ENCODE measurements at regions of chr15 and their contacts with region 1.

Region 1: GRCh38 chr15:41989259-41989933 is 17.0 kb upstream of the EHD4 start:
- DNase-seq: peak; percentile 93
- H3K4me3 ChIP-seq: no peak overlapping the region
- H3K27ac ChIP-seq: no peak overlapping the region
- H3K4me1 ChIP-seq: no peaks in the 10 kb centered on the region
- H3K27me3 ChIP-seq: no peaks in the 10 kb centered on the region
- CTCF ChIP-seq: peak; percentile 98

Region 2: GRCh38 chr15:41483115-41483514 is 506.3 kb before region 1 on chr15:
- intact Hi-C with region 1: no loop called
- DNase-seq: no peak
- H3K4me3 ChIP-seq: no peak overlapping the region
- H3K27ac ChIP-seq: peak overlapping the region; percentile 66
- H3K4me1 ChIP-seq: no peaks in the 10 kb centered on the region
- H3K27me3 ChIP-seq: no peaks in the 10 kb centered on the region
- CTCF ChIP-seq: no peak

Region 3: DNA sequence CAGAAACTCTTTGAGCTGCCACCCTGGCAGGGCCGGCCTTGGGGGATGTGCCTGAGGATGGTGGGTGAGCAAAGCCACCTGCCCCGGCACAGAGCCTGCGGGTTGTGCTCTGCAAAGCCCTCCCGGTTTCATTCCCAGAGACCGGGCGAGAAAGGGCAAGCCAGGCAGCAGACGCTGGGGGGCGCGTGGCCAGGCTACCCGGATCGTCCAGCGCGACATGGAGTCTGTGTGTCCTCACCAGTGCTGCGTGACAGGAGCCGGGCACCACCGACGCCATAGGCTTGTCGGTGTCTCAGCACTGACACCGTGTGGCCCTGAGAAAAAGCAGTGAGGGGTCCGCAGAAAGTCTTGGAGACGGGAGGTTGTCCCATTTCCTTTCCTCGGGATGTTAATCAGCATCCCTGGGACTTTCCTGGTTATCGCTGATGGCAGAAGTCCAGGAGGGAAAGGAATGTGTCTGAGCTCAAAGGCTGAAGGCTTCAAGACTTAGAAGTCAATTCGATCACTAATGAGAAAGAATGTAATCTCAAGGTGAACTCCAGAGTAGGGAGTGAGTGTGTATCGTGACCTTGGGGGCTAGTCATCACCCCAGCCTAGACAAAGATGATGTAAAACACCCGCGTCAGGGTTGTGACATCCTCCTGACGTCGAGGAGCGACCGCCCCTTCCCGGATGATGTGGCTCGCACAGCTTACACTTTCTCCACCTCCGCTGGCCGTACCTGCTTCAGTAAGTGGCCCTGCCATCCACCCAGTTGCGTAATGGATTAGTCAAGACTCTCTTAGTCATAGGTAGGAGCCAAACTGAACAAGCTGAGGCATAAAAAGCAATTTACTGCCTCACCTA is 67.8 kb after region 1 on chr15:
- intact Hi-C with region 1: loop called (anchors 2 kb)
- DNase-seq: peak; percentile 88
- H3K4me3 ChIP-seq: peak overlapping the region; percentile 15
- H3K27ac ChIP-seq: peak overlapping the region; percentile 77
- H3K4me1 ChIP-seq: no peaks in the 10 kb centered on the region
- H3K27me3 ChIP-seq: no peaks in the 10 kb centered on the region
- CTCF ChIP-seq: peak; percentile 28